ENCODE measurements at regions of chr4 and their contacts with region 1.

Region 1: GRCh38 chr4:13654158-13654797 is 26.8 kb upstream of the BOD1L1 start:
- DNase-seq: peak; percentile 78
- H3K4me3 Mint-ChIP-seq: peak overlapping the region; percentile 72
- H3K27ac Mint-ChIP-seq: no peak overlapping the region
- H3K4me1 Mint-ChIP-seq: peaks cover 9% of the 10 kb centered on the region
- H3K27me3 Mint-ChIP-seq: no peaks in the 10 kb centered on the region
- CTCF ChIP-seq: peak; percentile 61

Region 2: GRCh38 chr4:12852338-12853307 is 801.7 kb before region 1 on chr4:
- CTCF ChIA-PET with region 1: no interaction called
- POLR2A ChIA-PET with region 1: no interaction called
- intact Hi-C with region 1: loop called (anchors 1 kb)
- DNase-seq: peak; percentile 85
- H3K4me3 Mint-ChIP-seq: peak overlapping the region; percentile 16
- H3K27ac Mint-ChIP-seq: peak overlapping the region; percentile 93
- H3K4me1 Mint-ChIP-seq: peaks cover 7% of the 10 kb centered on the region
- H3K27me3 Mint-ChIP-seq: no peaks in the 10 kb centered on the region
- CTCF ChIP-seq: peak; percentile 64

Region 3: DNA sequence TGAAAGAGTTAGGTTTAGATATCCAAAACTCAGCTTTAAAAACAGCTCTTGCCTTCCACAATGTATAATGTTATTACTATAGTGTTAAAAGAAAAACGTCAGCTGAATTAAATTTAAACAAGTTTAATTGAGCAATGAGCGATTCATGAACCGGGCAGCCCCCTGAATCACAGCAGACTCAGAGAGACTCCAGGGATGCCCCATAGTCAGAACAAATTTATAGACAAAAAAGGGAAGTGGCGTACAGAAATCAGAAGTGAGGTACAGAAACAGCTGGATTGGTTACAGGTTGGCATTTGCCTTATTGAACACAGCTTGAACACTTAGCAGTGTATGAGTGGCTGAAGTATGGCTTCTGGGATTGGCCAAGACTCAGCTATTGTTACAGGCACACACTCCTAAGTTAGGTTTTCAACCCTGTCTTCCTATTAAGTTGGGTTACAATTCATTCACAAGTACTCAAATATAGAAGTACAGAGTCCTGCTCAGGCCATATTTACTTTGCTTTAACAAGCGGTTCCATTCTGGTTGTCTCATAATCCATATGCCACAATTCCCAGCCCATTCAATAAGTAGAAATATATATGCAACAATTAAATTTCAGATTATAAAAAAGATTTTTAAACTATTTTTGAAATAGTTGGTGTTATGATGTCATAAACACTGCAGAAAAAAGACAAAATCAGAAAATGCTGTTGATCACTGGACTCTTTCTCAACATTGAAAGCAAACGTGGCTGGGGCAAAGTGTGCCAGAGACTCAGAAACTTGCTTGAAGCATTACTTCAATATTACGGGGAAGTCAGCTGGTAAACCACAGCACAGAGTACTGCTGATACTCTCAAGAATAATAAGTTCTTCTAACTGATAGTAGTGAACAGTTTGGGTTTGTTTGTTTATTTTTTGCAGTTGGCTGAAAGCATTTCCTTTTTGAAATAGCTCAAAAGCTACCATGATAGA is 629.9 kb before region 1 on chr4:
- CTCF ChIA-PET with region 1: no interaction called
- POLR2A ChIA-PET with region 1: no interaction called
- intact Hi-C with region 1: no loop called
- DNase-seq: no peak
- H3K4me3 Mint-ChIP-seq: no peak overlapping the region
- H3K27ac Mint-ChIP-seq: no peak overlapping the region
- H3K4me1 Mint-ChIP-seq: no peaks in the 10 kb centered on the region
- H3K27me3 Mint-ChIP-seq: no peaks in the 10 kb centered on the region
- CTCF ChIP-seq: no peak

Region 4: DNA sequence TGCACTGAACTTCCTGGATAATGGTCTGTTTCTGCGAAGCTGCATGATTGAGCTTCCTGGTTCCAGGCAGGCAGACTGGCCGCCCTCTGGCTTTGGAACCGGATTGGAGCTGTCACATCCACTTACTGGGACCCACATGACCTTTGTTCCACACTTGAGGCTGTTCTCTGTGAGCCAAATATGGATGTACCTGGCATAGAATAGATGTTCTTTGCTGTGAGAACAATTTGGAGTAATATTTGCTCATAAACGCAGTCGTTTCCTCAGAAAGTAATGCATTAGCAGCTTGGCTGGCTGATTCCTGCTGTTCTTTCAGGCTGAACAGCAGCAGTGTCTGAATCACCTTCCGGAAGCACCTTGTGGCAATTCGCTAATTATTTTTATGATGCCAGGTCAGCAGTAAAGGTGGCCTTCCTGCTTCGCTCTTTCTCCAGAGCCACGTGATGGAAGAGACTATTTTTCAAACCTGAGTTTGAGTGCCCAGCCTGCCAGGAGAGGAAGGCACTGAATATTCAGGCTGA is 51.3 kb after region 1 on chr4:
- CTCF ChIA-PET with region 1: interaction called, 9 read pairs
- POLR2A ChIA-PET with region 1: interaction called, 5 read pairs
- intact Hi-C with region 1: loop called (anchors 2 kb)
- DNase-seq: peak; percentile 88
- H3K4me3 Mint-ChIP-seq: peak overlapping the region; percentile 63
- H3K27ac Mint-ChIP-seq: peak overlapping the region; percentile 95
- H3K4me1 Mint-ChIP-seq: peaks cover 57% of the 10 kb centered on the region
- H3K27me3 Mint-ChIP-seq: no peaks in the 10 kb centered on the region
- CTCF ChIP-seq: no peak

Region 5: GRCh38 chr4:13966231-13967195 is 312.2 kb after region 1 on chr4:
- CTCF ChIA-PET with region 1: interaction called, 5 read pairs
- POLR2A ChIA-PET with region 1: no interaction called
- intact Hi-C with region 1: loop called (anchors 1 kb)
- DNase-seq: peak; percentile 68
- H3K4me3 Mint-ChIP-seq: no peak overlapping the region
- H3K27ac Mint-ChIP-seq: no peak overlapping the region
- H3K4me1 Mint-ChIP-seq: peaks cover 6% of the 10 kb centered on the region
- H3K27me3 Mint-ChIP-seq: no peaks in the 10 kb centered on the region
- CTCF ChIP-seq: no peak

Region 6: GRCh38 chr4:14452764-14453163 is 798.5 kb after region 1 on chr4:
- CTCF ChIA-PET with region 1: interaction called, 5 read pairs
- POLR2A ChIA-PET with region 1: no interaction called
- intact Hi-C with region 1: loop called (anchors 5 kb)
- DNase-seq: no peak
- H3K4me3 Mint-ChIP-seq: no peak overlapping the region
- H3K27ac Mint-ChIP-seq: no peak overlapping the region
- H3K4me1 Mint-ChIP-seq: no peaks in the 10 kb centered on the region
- H3K27me3 Mint-ChIP-seq: no peaks in the 10 kb centered on the region
- CTCF ChIP-seq: no peak

Region 7: GRCh38 chr4:15162465-15163283 is 1508.4 kb after region 1 on chr4:
- CTCF ChIA-PET with region 1: interaction called, 41 read pairs
- POLR2A ChIA-PET with region 1: no interaction called
- intact Hi-C with region 1: loop called (anchors 1 kb)
- DNase-seq: peak; percentile 51
- H3K4me3 Mint-ChIP-seq: no peak overlapping the region
- H3K27ac Mint-ChIP-seq: peak overlapping the region; percentile 28
- H3K4me1 Mint-ChIP-seq: peaks cover 12% of the 10 kb centered on the region
- H3K27me3 Mint-ChIP-seq: no peaks in the 10 kb centered on the region
- CTCF ChIP-seq: peak; percentile 58